ENCODE measurements at regions of chr3 and their contacts with region 1.

Region 1: GRCh38 chr3:158097593-158098308 is 8.5 kb downstream of the SHOX2 start:
- ATAC-seq: peak in 5 of 8 experiments; percentile 93 to 96 (median 95)
- H3K4me3 ChIP-seq: peak overlapping the region; percentile 39 to 60 (median 52)
- H3K27ac ChIP-seq: peak overlapping the region in 1 of 2 donors; percentile 65
- H3K4me1 ChIP-seq: peaks cover 3 to 4% of the 10 kb centered on the region in 2 donors

Region 2: GRCh38 chr3:157948605-157949383 is 149.0 kb before region 1 on chr3:
- in situ Hi-C with region 1: no loop called
- ATAC-seq: peak in 1 of 8 experiments; percentile 51
- H3K4me3 ChIP-seq: no peak overlapping the region
- H3K27ac ChIP-seq: no peak overlapping the region
- H3K4me1 ChIP-seq: peaks cover 4 to 10% of the 10 kb centered on the region in 2 donors

Region 3: GRCh38 chr3:157981819-157982218 is 115.9 kb before region 1 on chr3:
- in situ Hi-C with region 1: loop called in 1 of 9 experiments (anchors 25 kb)
- ATAC-seq: peak in 1 of 8 experiments; percentile 37
- H3K4me3 ChIP-seq: no peak overlapping the region
- H3K27ac ChIP-seq: no peak overlapping the region
- H3K4me1 ChIP-seq: no peaks in the 10 kb centered on the region